HepG2 (cell line): ENCODE measurements at regions of chr4 and their contacts with region 1.

Region 1: DNA sequence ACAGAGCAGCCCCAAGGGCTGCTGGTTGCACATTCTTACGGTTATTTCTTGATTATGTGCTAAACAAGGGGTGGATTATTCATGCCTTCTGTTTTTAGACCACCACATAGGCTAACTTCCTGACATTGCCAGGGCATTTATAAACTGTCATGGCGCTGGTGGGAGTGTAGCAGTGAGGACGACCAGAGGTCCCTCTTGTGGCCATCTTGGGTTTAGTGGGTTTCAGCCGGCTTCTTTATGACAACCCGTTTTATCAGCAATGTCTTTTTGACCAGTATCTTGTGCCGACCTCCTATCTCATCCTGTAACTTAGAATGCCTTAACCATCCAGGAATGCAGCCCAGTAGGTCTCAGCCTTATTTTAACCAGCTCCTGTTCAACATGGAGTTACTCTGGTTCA is 212.4 kb upstream of the GRID2 start:
- DNase-seq: peak; percentile 21
- ATAC-seq: peak; percentile 87
- H3K4me3 ChIP-seq: peak overlapping the region; percentile 12 to 41 (median 16); a peak in 4 of 6 replicates
- H3K27ac ChIP-seq: no peak overlapping the region
- H3K4me1 ChIP-seq: no peaks in the 10 kb centered on the region
- H3K27me3 ChIP-seq: 0 out of 5 replicates have a peak, but pooled peaks cover 0 to 1% of the 10 kb centered on the region in 2 experiments
- CTCF ChIP-seq: peak; percentile 32; the same call in 1 of the 2 replicates
- EP300 ChIP-seq: no peak
- POLR2A ChIP-seq: no peak
- RAD21 ChIP-seq: peak; percentile 40; the same call in 1 of the 2 replicates

Region 2: GRCh38 chr4:91734682-91735081 is 356.7 kb before region 1 on chr4:
- CTCF ChIA-PET with region 1: no interaction called
- POLR2A ChIA-PET with region 1: no interaction called
- in situ Hi-C with region 1: no loop called
- intact Hi-C with region 1: loop called (anchors 1 kb)
- DNase-seq: peak; percentile 1
- ATAC-seq: no peak
- H3K4me3 ChIP-seq: no peak overlapping the region
- H3K27ac ChIP-seq: no peak overlapping the region
- H3K4me1 ChIP-seq: no peaks in the 10 kb centered on the region
- H3K27me3 ChIP-seq: no peaks in the 10 kb centered on the region
- CTCF ChIP-seq: no peak
- EP300 ChIP-seq: no peak
- POLR2A ChIP-seq: no peak
- RAD21 ChIP-seq: no peak

Region 3: GRCh38 chr4:92012899-92013867 is 78.2 kb before region 1 on chr4:
- CTCF ChIA-PET with region 1: no interaction called
- POLR2A ChIA-PET with region 1: no interaction called
- in situ Hi-C with region 1: no loop called
- intact Hi-C with region 1: loop called (anchors 1 kb)
- DNase-seq: peak; percentile 35
- ATAC-seq: peak; percentile 91
- H3K4me3 ChIP-seq: no peak overlapping the region
- H3K27ac ChIP-seq: no peak overlapping the region
- H3K4me1 ChIP-seq: peaks cover 8% of the 10 kb centered on the region
- H3K27me3 ChIP-seq: no peaks in the 10 kb centered on the region
- CTCF ChIP-seq: peak; percentile 69
- EP300 ChIP-seq: 0 out of 4 replicates have a peak, but pooled peaks of 1 of the 2 experiments have one; percentile 13
- POLR2A ChIP-seq: no peak
- RAD21 ChIP-seq: no peak

Region 4: DNA sequence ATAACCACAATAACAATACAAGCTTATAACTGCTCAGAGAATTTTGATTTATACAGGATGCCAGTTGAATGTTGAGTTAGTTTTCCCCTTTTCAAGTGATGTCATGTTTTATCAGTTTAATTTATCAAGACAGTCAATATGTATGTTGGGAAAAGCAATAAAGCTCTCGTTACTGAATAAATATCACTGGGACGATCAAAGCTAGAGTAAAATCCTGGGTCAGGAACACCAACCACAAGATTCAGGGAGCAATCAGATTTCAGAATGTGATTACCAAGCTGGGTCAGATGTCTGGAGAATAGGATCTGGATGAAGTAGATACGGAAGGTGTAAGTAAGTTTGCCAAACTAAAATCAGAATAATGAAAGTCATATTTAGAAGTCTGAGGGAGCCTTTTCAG is 392.0 kb after region 1 on chr4:
- CTCF ChIA-PET with region 1: no interaction called
- POLR2A ChIA-PET with region 1: no interaction called
- in situ Hi-C with region 1: no loop called
- intact Hi-C with region 1: no loop called
- DNase-seq: no peak
- ATAC-seq: no peak
- H3K4me3 ChIP-seq: no peak overlapping the region
- H3K27ac ChIP-seq: no peak overlapping the region
- H3K4me1 ChIP-seq: no peaks in the 10 kb centered on the region
- H3K27me3 ChIP-seq: no peaks in the 10 kb centered on the region
- CTCF ChIP-seq: no peak
- EP300 ChIP-seq: no peak
- POLR2A ChIP-seq: no peak
- RAD21 ChIP-seq: no peak